ENCODE measurements at regions of chr6 and their contacts with region 1.

Region 1: DNA sequence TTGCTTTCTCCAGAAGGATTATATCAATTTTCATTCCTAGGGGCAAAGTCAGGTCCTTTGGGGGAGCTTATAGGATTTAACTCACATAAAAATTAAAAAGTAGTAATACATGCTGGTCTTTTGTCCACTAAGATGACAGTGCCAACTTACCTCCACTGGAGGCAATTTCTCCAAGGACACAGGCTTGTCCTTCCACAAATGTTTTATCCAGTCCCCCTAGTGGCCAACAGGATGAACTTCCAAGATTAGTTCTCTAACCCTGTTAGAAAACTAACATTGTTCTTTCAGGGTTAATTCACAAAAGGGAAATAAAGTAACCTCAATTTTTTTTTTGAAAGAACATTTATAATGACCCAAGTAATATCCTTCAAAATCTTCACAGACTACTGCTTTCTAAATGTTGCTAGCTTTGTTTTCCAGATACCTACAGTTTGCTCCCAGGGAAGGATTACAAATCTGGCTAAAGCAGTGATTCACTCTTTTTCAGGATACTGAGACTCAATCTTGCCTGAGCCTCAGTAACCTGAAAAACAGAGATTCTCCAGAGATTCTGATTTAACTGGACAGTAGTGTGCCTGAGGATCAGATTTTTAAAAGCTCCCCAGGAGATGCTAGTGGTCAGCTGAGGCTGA is 31.7 kb upstream of the UBR2 start:
- DNase-seq: no peak
- H3K4me3 ChIP-seq: no peak overlapping the region
- H3K27ac ChIP-seq: no peak overlapping the region
- H3K4me1 ChIP-seq: no peaks in the 10 kb centered on the region
- H3K27me3 ChIP-seq: no peaks in the 10 kb centered on the region
- CTCF ChIP-seq: peak; percentile 61 to 76 (median 73)

Region 2: DNA sequence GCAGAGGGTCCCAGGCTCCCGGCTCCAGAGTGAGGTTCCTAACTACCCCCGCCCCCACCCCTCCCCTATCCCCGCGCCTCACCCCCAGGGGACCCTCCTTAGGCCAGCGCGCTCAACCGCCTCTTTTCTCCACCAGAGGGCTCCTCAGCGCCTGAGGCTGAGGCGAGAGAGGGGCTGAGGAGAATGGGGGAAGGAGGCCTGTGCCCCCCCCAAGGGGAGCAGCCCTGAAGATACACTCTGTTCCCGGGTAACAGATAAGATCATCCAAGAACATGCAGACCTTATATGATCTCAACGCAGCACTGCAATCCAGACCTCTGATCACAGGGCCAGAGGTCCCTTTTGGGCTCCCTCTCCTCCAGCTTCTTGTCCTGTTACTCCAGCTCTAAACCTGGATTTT is 271.2 kb before region 1 on chr6:
- intact Hi-C with region 1: loop called (anchors 2 kb)
- DNase-seq: no peak
- H3K4me3 ChIP-seq: no peak overlapping the region
- H3K27ac ChIP-seq: no peak overlapping the region
- H3K4me1 ChIP-seq: no peaks in the 10 kb centered on the region
- H3K27me3 ChIP-seq: no peaks in the 10 kb centered on the region
- CTCF ChIP-seq: peak in 2 of 3 experiments; percentile 44 to 56

Region 3: DNA sequence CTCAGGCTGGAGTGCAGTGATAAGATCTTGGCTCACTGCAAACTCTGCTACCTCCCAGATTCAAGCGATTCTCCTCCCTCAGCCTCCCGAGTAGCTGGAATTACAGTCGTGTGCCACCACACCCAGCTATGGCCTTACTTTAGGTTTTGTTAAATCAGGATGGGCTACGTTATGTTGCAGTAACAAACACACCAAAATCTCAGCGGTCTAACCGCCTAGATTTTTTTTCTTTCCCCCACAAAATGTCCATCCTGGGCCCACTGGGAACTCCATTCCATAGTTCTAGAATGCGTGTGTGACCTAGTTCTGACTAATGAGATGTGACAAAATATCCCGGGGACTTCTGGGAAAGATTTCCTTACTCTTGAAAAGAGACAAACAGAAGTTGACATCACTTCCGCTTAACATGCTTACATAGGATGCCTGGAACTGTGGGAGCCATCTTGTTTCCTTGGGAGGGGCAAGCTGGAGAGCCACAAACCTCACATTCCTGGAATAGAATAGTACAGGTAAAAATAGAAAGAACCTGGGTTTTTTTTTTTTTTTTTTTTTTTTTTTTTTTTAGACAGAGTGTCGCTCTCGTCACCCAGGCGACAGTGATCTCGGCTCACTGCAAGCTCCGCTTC is 38.1 kb before region 1 on chr6:
- intact Hi-C with region 1: no loop called
- DNase-seq: no peak
- H3K4me3 ChIP-seq: no peak overlapping the region
- H3K27ac ChIP-seq: no peak overlapping the region
- H3K4me1 ChIP-seq: no peaks in the 10 kb centered on the region
- H3K27me3 ChIP-seq: no peaks in the 10 kb centered on the region
- CTCF ChIP-seq: no peak

Measured in ascending aorta (tissue), 2 donors.